PC-3 (cell line): ENCODE measurements at regions of chr19 and their contacts with region 1.

Region 1: DNA sequence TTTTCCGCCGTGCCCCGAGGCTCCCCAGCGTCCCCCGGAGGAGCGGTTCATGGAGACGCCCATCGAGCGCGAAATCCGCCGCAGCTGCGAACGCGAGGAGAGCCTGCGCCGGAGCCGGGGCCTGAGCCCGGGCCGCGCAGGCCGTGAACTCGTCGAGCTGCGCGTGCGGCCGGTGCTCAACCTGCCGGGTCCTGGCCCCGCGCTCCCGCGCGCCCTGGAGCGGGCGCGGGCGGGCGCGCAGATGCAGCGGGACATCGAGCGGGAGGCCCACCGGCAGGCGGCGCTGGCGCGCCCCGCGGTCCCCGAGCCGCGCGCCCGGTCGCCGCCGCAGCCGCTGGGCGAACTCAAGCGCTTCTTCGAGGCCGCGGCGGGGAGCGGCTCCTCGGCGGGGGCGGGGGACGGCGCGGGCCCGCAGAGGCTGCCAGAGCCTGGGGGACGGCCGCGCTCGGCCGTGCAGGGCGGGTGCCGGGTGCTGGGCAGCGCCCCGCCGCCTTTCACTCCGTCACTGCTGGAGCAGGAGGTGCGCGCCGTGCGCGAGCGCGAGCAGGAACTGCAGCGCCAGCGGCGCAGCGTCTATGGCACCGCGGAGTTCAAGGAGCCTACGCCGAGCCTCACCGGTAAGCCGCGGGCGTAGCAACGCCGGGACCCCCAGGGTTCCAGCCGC is 807 bp downstream of the MISP3 start:
- DNase-seq: peak; percentile 80
- ATAC-seq: peak; percentile 56
- H3K4me3 ChIP-seq: peak overlapping the region; percentile 77
- H3K27ac ChIP-seq: no peak overlapping the region
- H3K4me1 ChIP-seq: peaks cover 19% of the 10 kb centered on the region
- H3K27me3 ChIP-seq: no peaks in the 10 kb centered on the region
- CTCF ChIP-seq: 0 out of 2 replicates have a peak, but pooled peaks have one; percentile 27

Region 2: GRCh38 chr19:13784731-13785452 is 288.5 kb before region 1 on chr19:
- CTCF ChIA-PET with region 1: no interaction called
- POLR2A ChIA-PET with region 1: no interaction called
- intact Hi-C with region 1: loop called (anchors 10 kb)
- DNase-seq: peak; percentile 86
- ATAC-seq: peak; percentile 81
- H3K4me3 ChIP-seq: no peak overlapping the region; the same call in 1 of the 2 replicates
- H3K27ac ChIP-seq: no peak overlapping the region
- H3K4me1 ChIP-seq: peaks cover 19% of the 10 kb centered on the region
- H3K27me3 ChIP-seq: no peaks in the 10 kb centered on the region
- CTCF ChIP-seq: peak; percentile 90

Region 3: DNA sequence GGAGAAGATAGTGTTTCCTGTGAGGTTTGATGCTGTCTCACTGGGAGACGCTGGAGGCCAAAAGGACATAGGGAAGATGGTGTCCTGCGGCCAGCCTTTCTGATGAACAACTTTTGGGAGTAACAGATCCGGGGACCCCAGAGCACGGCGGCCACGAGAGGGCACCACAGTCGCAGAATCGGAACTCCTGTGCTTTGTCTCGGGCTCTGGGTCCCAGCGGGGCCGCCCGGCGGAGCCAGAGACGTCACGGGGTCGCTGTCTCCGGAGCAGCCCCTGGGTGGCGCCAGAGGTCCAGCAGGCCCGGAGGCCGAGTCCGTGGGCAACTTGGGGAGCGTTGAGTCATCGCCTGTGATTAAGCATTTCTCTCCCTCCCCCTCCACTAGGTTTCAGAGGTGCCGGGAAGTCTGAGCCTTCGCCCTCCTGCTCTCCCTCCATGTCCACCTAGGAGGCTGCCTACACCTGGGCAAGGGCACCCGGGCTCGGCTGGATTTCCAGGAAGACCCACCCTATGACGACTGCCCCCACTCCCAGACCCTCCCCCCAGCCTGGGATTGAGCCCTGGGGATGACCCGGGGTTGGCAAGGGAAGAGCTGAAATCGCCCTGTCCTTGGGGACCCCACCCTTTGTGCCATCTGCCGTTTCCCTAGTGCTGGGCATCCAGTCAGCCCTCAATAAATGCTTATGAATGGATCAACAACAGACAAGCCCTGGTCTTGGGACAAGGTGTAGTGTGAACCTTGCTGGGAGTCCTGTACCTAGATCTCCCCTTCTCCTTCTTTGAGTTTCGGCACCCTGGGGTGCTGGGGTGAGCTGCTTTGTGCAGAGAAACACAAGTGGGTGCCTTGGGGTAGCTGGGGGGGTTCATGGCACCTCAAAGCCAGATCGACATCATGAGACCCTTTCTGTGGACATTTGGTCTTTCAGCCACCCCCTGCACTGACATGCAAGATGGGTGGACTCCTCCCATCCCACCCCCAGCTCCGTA is 193.0 kb before region 1 on chr19:
- CTCF ChIA-PET with region 1: interaction called, 4 read pairs
- POLR2A ChIA-PET with region 1: no interaction called
- intact Hi-C with region 1: loop called (anchors 1 kb)
- DNase-seq: peak; percentile 99
- ATAC-seq: peak; percentile 89
- H3K4me3 ChIP-seq: peak overlapping the region; percentile 54
- H3K27ac ChIP-seq: peak overlapping the region; percentile 62
- H3K4me1 ChIP-seq: peaks cover 11% of the 10 kb centered on the region
- H3K27me3 ChIP-seq: no peaks in the 10 kb centered on the region
- CTCF ChIP-seq: peak; percentile 99

Region 4: DNA sequence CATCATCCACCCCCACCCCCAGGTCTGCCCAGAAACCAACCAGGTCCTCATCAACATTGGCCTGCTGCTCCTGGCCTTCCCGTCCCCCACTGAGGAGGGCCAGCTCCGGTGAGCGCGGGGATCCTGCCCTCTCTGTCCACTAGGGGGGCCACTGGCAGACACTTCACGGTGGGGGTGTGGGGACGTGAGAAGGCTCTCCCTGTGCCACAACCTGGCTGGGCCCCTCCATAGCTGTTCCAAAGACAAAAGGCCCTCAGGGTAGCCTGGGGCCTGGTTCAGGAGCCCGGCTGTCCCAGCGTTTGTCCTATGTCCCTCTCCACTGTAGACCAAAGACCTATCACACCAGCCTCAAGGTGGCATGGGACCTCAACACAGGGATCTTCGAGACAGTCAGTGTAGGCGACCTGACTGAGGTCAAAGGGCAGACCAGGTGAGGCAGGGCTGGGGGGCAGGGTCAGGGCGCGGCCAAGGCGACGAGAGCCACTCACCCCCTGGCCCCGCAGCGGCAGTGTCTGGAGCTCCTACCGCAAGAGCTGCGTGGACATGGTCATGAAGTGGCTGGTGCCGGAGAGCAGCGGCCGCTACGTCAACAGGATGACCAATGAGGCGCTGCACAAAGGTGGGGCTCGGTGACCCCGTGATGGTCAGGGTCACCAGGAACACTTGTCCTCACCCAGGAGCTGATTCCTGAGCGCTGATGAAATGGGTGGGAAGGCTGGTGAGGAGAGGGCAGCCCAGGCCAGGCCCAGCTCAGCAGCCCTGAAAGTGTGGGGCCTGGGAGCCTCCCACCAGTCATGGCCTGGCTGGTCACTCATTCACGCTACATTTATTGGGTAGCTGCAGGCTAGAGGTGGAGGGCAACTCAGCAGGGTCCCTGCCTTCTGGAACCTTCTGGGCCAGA is 113.2 kb before region 1 on chr19:
- CTCF ChIA-PET with region 1: no interaction called
- POLR2A ChIA-PET with region 1: no interaction called
- intact Hi-C with region 1: loop called (anchors 5 kb)
- DNase-seq: no peak
- ATAC-seq: no peak; the same call in none of the 2 replicates
- H3K4me3 ChIP-seq: no peak overlapping the region
- H3K27ac ChIP-seq: no peak overlapping the region
- H3K4me1 ChIP-seq: peaks cover 10% of the 10 kb centered on the region
- H3K27me3 ChIP-seq: no peaks in the 10 kb centered on the region
- CTCF ChIP-seq: peak; percentile 43; the same call in 1 of the 2 replicates

Region 5: GRCh38 chr19:14006243-14006765 is 67.1 kb before region 1 on chr19 and contains the start of gene RFX1:
- CTCF ChIA-PET with region 1: no interaction called
- POLR2A ChIA-PET with region 1: no interaction called
- intact Hi-C with region 1: no loop called
- DNase-seq: peak; percentile 100
- ATAC-seq: peak; percentile 90
- H3K4me3 ChIP-seq: peak within 1 kb of the TSS; percentile 84
- H3K27ac ChIP-seq: peak within 1 kb of the TSS; percentile 91
- H3K4me1 ChIP-seq: peaks cover 13% of the 10 kb centered on the region
- H3K27me3 ChIP-seq: no peaks in the 10 kb centered on the region
- CTCF ChIP-seq: no peak
- total RNA-seq, gene RFX1: 7.5 and 9.2 TPM in 2 replicates

Region 6: DNA sequence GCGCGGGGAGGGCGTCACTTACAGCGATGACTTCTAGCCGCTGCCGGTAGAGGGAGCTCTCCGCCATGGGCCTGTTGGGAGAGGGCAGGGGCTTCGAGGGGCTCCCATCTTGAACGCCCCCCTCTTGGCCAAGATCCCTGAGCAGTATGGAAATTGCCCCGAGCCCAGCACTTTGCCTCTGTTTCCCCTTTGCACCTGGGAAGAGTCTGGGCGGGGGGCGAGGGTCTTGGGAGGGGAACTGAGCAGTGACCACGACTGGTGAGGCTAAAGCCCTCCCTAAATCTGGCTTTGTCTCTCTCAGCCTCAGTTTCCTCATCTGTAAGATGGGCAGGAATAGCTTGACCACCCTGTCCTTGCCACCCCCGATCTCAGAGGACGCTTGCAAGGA is 14.3 kb before region 1 on chr19:
- CTCF ChIA-PET with region 1: interaction called, 13 read pairs
- POLR2A ChIA-PET with region 1: no interaction called
- intact Hi-C with region 1: no loop called
- DNase-seq: no peak
- ATAC-seq: no peak
- H3K4me3 ChIP-seq: no peak overlapping the region
- H3K27ac ChIP-seq: no peak overlapping the region
- H3K4me1 ChIP-seq: peaks cover 21% of the 10 kb centered on the region
- H3K27me3 ChIP-seq: no peaks in the 10 kb centered on the region
- CTCF ChIP-seq: peak; percentile 94

Region 7: GRCh38 chr19:14505488-14506432 is 432.4 kb after region 1 on chr19:
- CTCF ChIA-PET with region 1: no interaction called
- POLR2A ChIA-PET with region 1: interaction called, 29 read pairs
- intact Hi-C with region 1: no loop called
- DNase-seq: peak; percentile 99
- ATAC-seq: peak; percentile 83
- H3K4me3 ChIP-seq: peak overlapping the region; percentile 41
- H3K27ac ChIP-seq: peak overlapping the region; percentile 96
- H3K4me1 ChIP-seq: peaks cover 74% of the 10 kb centered on the region
- H3K27me3 ChIP-seq: no peaks in the 10 kb centered on the region
- CTCF ChIP-seq: peak; percentile 93